Activated CD4-positive, alpha-beta T cell treated with anti-CD3 and anti-CD28 coated beads, Interleukin-2, amount 10 ng/mL, durations not matched to agents 24 days and 14 days (primary cell): ENCODE measurements at regions of chr2 and their contacts with region 1.

Region 1: DNA sequence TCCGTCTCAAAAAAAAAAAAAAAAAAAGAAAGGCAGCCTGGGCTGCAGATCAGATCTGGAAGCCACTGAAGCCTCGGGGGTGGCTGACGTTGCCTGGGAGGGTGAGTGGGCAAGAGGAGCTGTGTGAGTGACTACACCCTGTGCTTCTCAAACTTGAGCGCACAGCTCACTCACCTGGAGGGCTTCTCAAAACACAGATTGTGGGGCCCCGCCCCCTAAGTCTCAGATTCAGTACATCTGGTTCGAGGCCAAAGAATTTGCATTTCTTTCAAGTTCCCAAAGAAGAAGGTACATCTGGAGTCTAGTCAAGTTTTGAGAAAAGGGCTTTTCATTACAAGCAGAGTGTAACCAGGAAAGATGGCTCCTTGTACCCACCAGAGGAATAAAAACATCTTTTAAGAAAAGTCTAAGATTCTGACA is 97.7 kb upstream of the CAB39 start:
- DNase-seq: peak; percentile 79
- H3K4me3 Mint-ChIP-seq: peak overlapping the region; percentile 15
- H3K27ac Mint-ChIP-seq: peak overlapping the region; percentile 51
- H3K4me1 Mint-ChIP-seq: peaks cover 45% of the 10 kb centered on the region
- H3K27me3 Mint-ChIP-seq: no peaks in the 10 kb centered on the region

Region 2: DNA sequence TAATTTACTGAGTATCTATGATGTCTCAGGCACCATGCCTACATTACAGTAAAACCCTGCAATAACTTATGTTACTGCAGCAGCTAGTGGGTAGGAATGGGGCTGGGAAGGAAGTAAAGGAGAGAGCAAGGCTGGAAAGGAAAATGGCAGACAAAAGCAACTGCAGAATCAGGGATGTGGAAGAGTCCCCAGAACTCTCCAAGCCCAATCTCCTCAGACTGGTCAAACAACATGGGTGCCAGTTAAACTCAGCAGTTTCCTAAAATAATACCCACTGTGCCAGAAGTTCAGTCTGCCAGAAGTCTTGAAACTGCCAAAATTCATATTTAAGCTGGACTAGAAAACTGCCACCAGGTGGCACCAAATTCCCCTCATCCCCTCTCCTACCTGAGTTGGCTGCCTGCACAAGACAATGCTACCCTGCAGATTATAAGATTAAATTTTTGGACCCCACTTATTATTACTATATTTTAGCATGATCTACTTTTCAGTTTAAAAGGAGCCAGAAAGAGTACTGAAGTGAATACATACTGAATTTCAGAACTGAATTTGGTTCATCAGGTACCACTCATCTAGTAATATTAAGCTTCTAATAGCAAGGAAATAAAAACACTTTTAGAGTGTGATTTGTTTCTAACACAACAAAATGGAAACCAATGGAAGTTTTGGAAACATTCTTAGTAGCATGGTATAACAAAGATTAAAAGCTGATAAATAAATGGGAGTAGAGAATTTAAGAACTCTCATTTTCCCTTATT is 813.7 kb before region 1 on chr2:
- intact Hi-C with region 1: loop called (anchors 10 kb)
- DNase-seq: peak; percentile 89
- H3K4me3 Mint-ChIP-seq: no peak overlapping the region
- H3K27ac Mint-ChIP-seq: no peak overlapping the region
- H3K4me1 Mint-ChIP-seq: no peaks in the 10 kb centered on the region
- H3K27me3 Mint-ChIP-seq: no peaks in the 10 kb centered on the region

Region 3: DNA sequence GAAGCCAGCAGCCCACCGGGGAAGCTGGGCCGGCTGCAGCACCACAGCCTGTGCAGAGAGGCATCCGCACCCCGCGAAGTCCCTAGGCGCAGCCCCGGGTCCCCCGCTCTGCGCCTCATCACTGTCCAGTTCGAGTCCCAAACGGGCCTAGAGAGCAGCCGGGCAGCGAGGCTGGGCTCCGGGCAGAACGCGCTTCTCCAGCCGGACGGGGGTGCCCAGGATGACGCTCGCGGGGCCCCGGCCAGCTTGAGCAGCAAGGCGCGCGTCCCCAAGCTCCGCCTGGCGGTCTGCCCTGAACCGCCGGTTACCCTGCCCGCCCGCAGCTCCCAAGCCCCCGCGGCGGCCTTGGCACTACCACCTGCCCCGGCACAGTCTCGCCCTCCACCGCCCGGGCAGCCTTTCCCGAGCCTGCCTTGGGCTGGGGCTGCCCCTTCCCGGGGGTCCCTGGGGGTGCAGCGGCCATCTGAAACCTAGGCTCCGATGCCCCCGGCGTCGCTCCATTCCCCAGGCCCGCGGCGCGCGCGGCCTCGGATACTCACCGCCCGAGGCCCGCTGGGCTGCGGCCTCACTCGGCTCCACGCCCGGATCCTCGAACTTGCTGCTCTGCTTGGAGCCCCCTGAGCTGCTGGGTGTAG is 546.8 kb before region 1 on chr2:
- intact Hi-C with region 1: loop called (anchors 1 kb)
- DNase-seq: peak; percentile 82
- H3K4me3 Mint-ChIP-seq: peak overlapping the region; percentile 80
- H3K27ac Mint-ChIP-seq: peak overlapping the region; percentile 90
- H3K4me1 Mint-ChIP-seq: peaks cover 18% of the 10 kb centered on the region
- H3K27me3 Mint-ChIP-seq: peaks cover 20% of the 10 kb centered on the region

Region 4: GRCh38 chr2:230254152-230254881 is 360.6 kb before region 1 on chr2:
- intact Hi-C with region 1: loop called (anchors 10 kb)
- DNase-seq: peak; percentile 80
- H3K4me3 Mint-ChIP-seq: no peak overlapping the region
- H3K27ac Mint-ChIP-seq: no peak overlapping the region
- H3K4me1 Mint-ChIP-seq: peaks cover 18% of the 10 kb centered on the region
- H3K27me3 Mint-ChIP-seq: no peaks in the 10 kb centered on the region

Region 5: GRCh38 chr2:230411570-230412370 is 203.2 kb before region 1 on chr2:
- intact Hi-C with region 1: loop called (anchors 5 kb)
- DNase-seq: peak; percentile 95
- H3K4me3 Mint-ChIP-seq: peak overlapping the region; percentile 99
- H3K27ac Mint-ChIP-seq: peak overlapping the region; percentile 99
- H3K4me1 Mint-ChIP-seq: peaks cover 61% of the 10 kb centered on the region
- H3K27me3 Mint-ChIP-seq: no peaks in the 10 kb centered on the region

Region 6: GRCh38 chr2:230774348-230774951 is 159.5 kb after region 1 on chr2:
- intact Hi-C with region 1: no loop called
- DNase-seq: no peak
- H3K4me3 Mint-ChIP-seq: no peak overlapping the region
- H3K27ac Mint-ChIP-seq: peak overlapping the region; percentile 13
- H3K4me1 Mint-ChIP-seq: peaks cover 78% of the 10 kb centered on the region
- H3K27me3 Mint-ChIP-seq: no peaks in the 10 kb centered on the region

Region 7: GRCh38 chr2:230798769-230799399 is 184.0 kb after region 1 on chr2:
- intact Hi-C with region 1: loop called (anchors 2 kb)
- DNase-seq: peak; percentile 88
- H3K4me3 Mint-ChIP-seq: peak overlapping the region; percentile 31
- H3K27ac Mint-ChIP-seq: peak overlapping the region; percentile 71
- H3K4me1 Mint-ChIP-seq: peaks cover 22% of the 10 kb centered on the region
- H3K27me3 Mint-ChIP-seq: no peaks in the 10 kb centered on the region